ENCODE measurements at regions of chr3 and their contacts with region 1.

Region 1: DNA sequence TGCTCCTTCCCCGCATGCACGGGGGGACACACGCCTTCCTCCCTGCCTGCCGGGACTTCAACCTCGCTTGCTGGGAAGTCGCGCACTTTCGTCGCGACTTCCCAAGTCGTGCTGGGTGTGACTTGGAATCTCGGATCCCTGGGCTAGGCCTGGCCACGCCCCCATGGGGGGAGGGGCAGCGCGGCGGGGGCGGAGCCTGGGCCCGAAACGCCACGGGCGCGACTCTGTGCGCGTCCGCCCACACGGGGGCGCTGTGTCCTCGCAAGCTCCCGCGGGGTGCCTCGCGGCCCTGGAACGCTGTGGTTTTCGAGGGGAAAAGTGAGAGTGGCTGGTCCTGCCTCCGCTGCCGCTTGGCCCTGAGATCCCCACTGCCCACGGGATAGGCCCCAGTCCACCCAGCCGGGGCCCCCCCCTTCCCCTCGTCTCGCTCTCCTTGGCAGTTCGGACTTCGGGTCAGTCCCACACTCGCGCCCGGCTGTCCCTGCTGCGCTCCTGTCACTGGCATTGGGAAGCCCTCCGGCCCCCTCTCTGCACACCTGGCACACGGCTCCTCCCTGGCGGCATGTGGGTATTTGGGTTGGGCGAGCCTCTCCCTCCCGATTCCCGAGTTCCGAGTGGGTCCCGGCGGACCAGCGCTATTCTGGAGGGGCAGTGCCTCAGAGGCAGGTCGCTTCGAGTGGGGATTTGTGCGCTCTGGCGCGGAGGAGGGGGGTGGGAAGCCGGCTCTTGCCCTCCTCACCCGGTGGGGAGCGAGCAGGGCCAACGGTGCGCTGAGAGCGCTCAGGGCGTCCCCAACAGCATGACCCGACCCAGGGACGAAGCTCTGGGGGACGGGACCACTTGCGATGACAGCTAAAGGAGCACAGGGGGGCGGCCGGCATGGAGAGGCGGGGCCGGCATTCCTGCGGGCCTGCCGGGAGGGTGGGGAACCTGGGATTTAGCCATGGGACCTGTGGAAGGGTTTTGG is 23.6 kb downstream of the SEC61A1 start:
- DNase-seq: no peak
- H3K4me3 ChIP-seq: peak overlapping the region; percentile 56 to 67 (median 60)
- H3K27ac ChIP-seq: peak overlapping the region; percentile 60 to 77 (median 69)
- H3K4me1 ChIP-seq: peaks cover 32 to 39% (median 38%) of the 10 kb centered on the region in 4 donors
- H3K27me3 ChIP-seq: no peaks in the 10 kb centered on the region
- CTCF ChIP-seq: peak in 2 of 3 experiments; percentile 94 to 97
- EP300 ChIP-seq: no peak
- POLR2A ChIP-seq: no peak

Region 2: DNA sequence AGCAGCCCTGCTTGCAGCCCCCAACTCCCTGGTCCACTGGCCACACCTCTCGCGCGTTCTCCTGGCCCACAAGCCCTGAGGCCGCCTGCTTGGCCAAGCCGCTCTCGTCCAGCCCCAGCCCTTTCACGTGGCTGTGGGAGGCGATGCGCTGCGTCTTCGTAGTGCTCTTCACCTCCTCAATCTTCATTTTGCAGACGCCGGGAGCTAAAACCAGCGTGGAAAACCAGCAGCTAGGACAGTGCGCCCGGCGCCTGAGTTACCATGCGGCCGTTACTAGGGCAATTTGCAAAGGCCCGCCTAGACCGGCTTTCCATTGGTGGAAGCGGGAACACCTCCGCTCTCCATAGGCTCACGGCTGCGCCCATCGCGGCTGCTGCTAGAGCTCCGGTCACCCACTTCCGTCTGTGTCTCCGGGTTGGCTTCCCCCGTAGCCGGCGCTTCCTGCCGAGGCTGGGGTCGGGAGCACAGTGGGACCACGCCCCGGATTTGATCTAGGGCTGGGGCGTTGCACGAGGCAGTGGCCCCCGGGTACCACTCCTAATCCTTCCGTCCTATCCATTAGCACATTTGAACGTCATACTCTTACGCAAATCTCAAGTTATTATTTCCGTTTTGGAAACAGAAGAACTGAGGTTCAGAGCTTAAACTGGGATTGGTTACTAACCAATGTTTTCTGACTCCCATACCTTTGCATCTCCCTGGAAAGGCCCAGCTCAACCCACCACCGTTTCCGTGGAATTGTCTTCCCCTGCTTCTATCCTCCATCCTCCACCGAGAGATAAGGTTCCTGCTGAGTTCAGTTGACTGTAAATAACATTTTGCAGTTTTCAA is 48.0 kb after region 1 on chr3 and contains the start of gene RUVBL1:
- intact Hi-C with region 1: loop called (anchors 5 kb)
- DNase-seq: peak; percentile 98
- H3K4me3 ChIP-seq: peak within 1 kb of the TSS; percentile 72 to 89 (median 82)
- H3K27ac ChIP-seq: peak within 1 kb of the TSS; percentile 65 to 83 (median 76)
- H3K4me1 ChIP-seq: peaks cover 9 to 20% (median 17%) of the 10 kb centered on the region in 4 donors
- H3K27me3 ChIP-seq: no peaks in the 10 kb centered on the region
- CTCF ChIP-seq: no peak
- EP300 ChIP-seq: no peak
- POLR2A ChIP-seq: no peak
- total RNA-seq, gene RUVBL1: 21.4 to 28.9 (median 23.8) TPM

Region 3: GRCh38 chr3:128153156-128154041 is 77.6 kb after region 1 on chr3 and contains the start of gene EEFSEC:
- intact Hi-C with region 1: loop called (anchors 5 kb)
- DNase-seq: peak; percentile 94
- H3K4me3 ChIP-seq: peak within 1 kb of the TSS; percentile 81 to 100 (median 94)
- H3K27ac ChIP-seq: peak within 1 kb of the TSS; percentile 87 to 93 (median 90)
- H3K4me1 ChIP-seq: peaks cover 8 to 12% (median 11%) of the 10 kb centered on the region in 4 donors
- H3K27me3 ChIP-seq: no peaks in the 10 kb centered on the region
- CTCF ChIP-seq: no peak
- EP300 ChIP-seq: no peak
- POLR2A ChIP-seq: peak; percentile 34
- total RNA-seq, gene EEFSEC: 9.1 to 17.4 (median 15.8) TPM

Region 4: GRCh38 chr3:128503164-128503651 is 427.4 kb after region 1 on chr3:
- intact Hi-C with region 1: loop called (anchors 5 kb)
- DNase-seq: no peak
- H3K4me3 ChIP-seq: no peak overlapping the region
- H3K27ac ChIP-seq: no peak overlapping the region
- H3K4me1 ChIP-seq: peaks cover 0 to 2% (median under 1%) of the 10 kb centered on the region in 4 donors
- H3K27me3 ChIP-seq: peaks cover 0 to 80% (median 15%) of the 10 kb centered on the region in 4 donors
- CTCF ChIP-seq: peak in 2 of 3 experiments; percentile 4 to 6
- EP300 ChIP-seq: no peak
- POLR2A ChIP-seq: no peak

Region 5: DNA sequence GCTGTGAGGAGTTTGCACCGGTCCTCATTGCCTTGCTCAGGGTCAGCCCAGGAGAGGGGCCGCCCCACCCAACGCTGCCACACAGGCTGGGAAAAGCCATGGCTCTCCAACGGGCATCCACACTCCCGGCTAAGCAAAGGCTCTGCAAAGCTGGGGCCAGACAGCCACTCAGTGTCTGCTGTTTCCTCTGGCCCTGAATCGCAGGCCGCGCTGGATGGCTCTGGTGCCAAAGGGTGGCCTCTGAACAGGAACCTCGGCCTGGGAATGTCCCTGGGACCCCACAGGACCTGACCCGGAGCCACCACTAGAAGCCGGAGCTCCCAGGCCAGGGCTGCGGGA is 531.9 kb after region 1 on chr3:
- intact Hi-C with region 1: loop called (anchors 5 kb)
- DNase-seq: no peak
- H3K4me3 ChIP-seq: peak overlapping the region; percentile 59 to 66 (median 62)
- H3K27ac ChIP-seq: peak overlapping the region; percentile 65 to 80 (median 74)
- H3K4me1 ChIP-seq: peaks cover 13 to 17% (median 16%) of the 10 kb centered on the region in 4 donors
- H3K27me3 ChIP-seq: peaks cover 0 to 7% (median 0%) of the 10 kb centered on the region in 4 donors
- CTCF ChIP-seq: no peak
- EP300 ChIP-seq: no peak
- POLR2A ChIP-seq: no peak